ENCODE measurements at regions of chr15 and their contacts with region 1.

Region 1: GRCh38 chr15:48794697-48795134 is 16.2 kb downstream of the CEP152 start:
- DNase-seq: no peak
- ATAC-seq: peak; percentile 58

Region 2: GRCh38 chr15:48352474-48353072 is 442.1 kb before region 1 on chr15:
- intact Hi-C with region 1: loop called (anchors 10 kb)
- DNase-seq: no peak
- ATAC-seq: peak; percentile 74

Measured in left ventricle myocardium superior (tissue), 1 donor.